Adrenal gland (tissue), 19 donors: ENCODE measurements at regions of chr12 and their contacts with region 1.

Region 1: DNA sequence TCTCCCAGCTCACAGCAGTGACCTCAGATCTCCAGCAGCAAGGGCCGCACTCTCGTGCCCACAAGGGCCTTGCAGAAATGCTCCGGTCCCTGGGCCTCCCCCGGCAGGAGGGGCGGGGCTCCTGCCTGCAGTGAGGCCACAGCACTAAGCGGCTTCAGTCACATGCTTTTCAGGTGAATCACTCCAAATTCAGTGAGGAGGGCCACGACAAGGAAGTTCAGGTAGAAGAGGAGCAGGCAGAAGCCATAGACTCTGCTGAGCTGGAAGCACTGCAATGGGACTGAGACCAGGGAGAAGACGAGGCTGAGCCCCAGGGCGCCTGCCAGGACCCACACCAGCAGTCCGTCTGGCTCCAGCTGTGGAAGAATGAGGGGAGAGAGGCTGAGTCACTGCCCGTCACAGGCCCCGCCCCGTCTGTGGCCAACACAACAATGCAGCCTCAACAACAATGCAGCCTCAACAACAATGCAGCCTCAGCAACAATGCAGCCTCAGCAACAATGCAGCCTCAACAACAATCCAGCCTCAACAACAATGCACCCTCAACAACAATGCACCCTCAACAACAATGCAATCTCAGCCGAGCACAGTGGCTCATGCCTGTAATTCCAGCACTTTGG is 35.2 kb downstream of the SLC8B1 start:
- DNase-seq: peak; percentile 76 to 92 (median 90)
- H3K4me3 ChIP-seq: no peak overlapping the region
- H3K27ac ChIP-seq: peak overlapping the region; percentile 57 to 96 (median 90)
- H3K4me1 ChIP-seq: peaks cover 36 to 38% of the 10 kb centered on the region in 2 donors
- H3K27me3 ChIP-seq: no peaks in the 10 kb centered on the region
- CTCF ChIP-seq: no peak
- POLR2A ChIP-seq: peak in 1 of 2 donors; percentile 75

Region 2: GRCh38 chr12:113196996-113197395 is 102.7 kb before region 1 on chr12:
- intact Hi-C with region 1: loop called (anchors 10 kb)
- DNase-seq: peak; percentile 78 to 92 (median 84)
- H3K4me3 ChIP-seq: no peak overlapping the region
- H3K27ac ChIP-seq: peak overlapping the region in 1 of 5 donors; percentile 12
- H3K4me1 ChIP-seq: peaks cover 12 to 34% of the 10 kb centered on the region in 2 donors
- H3K27me3 ChIP-seq: no peaks in the 10 kb centered on the region
- CTCF ChIP-seq: peak; percentile 50 to 74 (median 72)
- POLR2A ChIP-seq: no peak

Region 3: GRCh38 chr12:113208041-113208934 is 91.4 kb before region 1 on chr12:
- intact Hi-C with region 1: loop called in 1 of 2 experiments (anchors 10 kb)
- DNase-seq: peak in 4 of 7 donors; percentile 59 to 80 (median 74)
- H3K4me3 ChIP-seq: no peak overlapping the region
- H3K27ac ChIP-seq: peak overlapping the region in 4 of 5 donors; percentile 14 to 82 (median 42)
- H3K4me1 ChIP-seq: peaks cover 17 to 23% of the 10 kb centered on the region in 2 donors
- H3K27me3 ChIP-seq: no peaks in the 10 kb centered on the region
- CTCF ChIP-seq: no peak
- POLR2A ChIP-seq: no peak